Heart left ventricle (tissue), 16 donors: ENCODE measurements at regions of chrX and their contacts with region 1.

Region 1: DNA sequence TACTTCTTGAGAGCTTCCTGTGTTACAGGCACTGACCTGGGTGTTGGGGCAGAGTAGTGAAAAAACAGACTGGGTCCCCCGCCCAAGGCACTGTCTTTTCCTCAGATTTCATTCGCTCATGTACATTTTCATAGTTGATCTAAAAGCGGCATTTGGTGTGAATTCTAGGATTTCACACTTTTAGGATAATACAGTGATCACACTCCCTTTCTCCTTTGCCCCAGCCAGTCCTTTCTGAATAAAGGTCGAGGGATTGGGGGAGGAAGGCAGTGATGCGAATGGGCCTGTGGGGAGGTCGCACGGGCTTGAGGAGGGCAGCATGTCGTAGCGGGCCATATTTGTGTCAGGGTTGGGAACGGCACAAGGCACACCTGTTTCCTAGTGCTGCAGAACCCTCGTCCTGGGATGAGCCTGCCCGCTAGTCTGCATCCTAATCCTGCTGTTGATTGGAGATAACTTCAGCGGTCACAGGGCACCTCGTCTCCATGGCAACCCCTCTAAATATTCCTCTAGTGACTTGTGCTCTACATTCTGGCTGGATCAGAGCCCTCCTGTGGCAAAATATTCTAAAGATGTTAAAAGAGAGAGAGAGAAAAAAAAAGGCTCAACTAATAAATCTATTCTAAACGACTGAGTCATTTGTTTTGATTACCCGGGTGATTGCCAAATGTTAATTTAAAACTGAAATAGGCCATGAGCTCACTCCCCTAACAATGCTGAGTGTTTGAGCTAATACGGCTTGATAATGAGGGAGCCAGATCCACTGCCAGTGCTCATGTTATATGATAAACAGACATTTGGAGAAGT is 21.8 kb downstream of the FHL1 start:
- DNase-seq: peak; percentile 53 to 75 (median 63)
- ATAC-seq: peak; percentile 83 to 87 (median 84)
- H3K4me3 ChIP-seq: peak overlapping the region in 8 of 12 donors; percentile 7 to 37 (median 18)
- H3K27ac ChIP-seq: peak overlapping the region; percentile 63 to 95 (median 83)
- H3K4me1 ChIP-seq: peaks cover 0 to 69% (median 24%) of the 10 kb centered on the region in 12 donors
- H3K27me3 ChIP-seq: peaks cover 0 to 8% (median 0%) of the 10 kb centered on the region in 9 donors
- CTCF ChIP-seq: peak in 1 of 12 donors; percentile 4
- POLR2A ChIP-seq: no peak

Region 2: GRCh38 chrX:136200466-136200865 is 31.3 kb after region 1 on chrX:
- intact Hi-C with region 1: loop called in 7 of 10 experiments (anchors 2 to 5 kb)
- DNase-seq: no peak
- ATAC-seq: peak; percentile 32 to 52 (median 39)
- H3K4me3 ChIP-seq: peak overlapping the region in 11 of 12 donors; percentile 5 to 56 (median 47)
- H3K27ac ChIP-seq: peak overlapping the region; percentile 67 to 93 (median 86)
- H3K4me1 ChIP-seq: peaks cover 3 to 72% (median 30%) of the 10 kb centered on the region in 12 donors
- H3K27me3 ChIP-seq: peaks cover 0 to 16% (median 0%) of the 10 kb centered on the region in 9 donors
- CTCF ChIP-seq: peak; percentile 14 to 51 (median 38)
- POLR2A ChIP-seq: no peak

Region 3: DNA sequence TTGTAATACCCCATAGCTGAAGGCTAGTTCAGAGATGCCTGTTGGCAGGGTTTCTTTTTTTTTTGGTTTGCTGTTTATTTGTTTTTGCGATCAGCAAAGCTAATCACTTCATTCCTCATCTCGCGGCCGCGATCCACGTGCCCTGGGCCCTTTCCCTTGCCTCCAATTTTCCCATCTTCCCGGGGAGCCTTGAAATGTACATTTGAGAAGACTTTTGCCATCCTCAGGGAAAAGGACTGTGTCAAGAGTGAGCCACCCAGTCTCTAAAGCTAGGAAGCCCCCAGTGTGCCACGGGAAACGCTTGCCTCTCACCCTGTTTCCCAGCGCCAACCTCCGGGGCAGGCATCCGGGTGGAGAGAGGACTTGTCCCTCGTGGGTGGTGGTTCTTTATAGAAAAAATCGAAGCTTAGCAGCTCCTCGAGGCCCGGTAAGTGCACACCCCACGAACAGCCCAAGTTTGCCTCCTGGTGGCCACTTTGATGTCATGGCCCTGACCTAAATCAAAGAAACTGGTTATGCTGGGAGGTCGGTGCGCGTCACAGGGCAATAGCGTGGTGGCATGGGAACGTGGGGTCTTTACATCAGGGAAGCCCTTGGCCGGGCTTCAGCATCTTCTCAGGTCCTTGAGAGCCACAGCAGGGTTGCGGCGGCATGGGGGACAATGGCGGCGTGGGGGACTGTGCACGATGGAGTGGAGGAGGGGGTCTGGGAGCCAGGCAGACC is 40.0 kb after region 1 on chrX:
- intact Hi-C with region 1: loop called in 8 of 10 experiments (anchors 2 to 5 kb)
- DNase-seq: peak; percentile 48 to 64 (median 57)
- ATAC-seq: peak in 3 of 4 donors; percentile 19 to 35 (median 21)
- H3K4me3 ChIP-seq: no peak overlapping the region
- H3K27ac ChIP-seq: peak overlapping the region in 11 of 12 donors; percentile 33 to 88 (median 65)
- H3K4me1 ChIP-seq: peaks cover 0 to 73% (median 24%) of the 10 kb centered on the region in 12 donors
- H3K27me3 ChIP-seq: peaks cover 0 to 3% (median 0%) of the 10 kb centered on the region in 9 donors
- CTCF ChIP-seq: peak; percentile 34 to 64 (median 50)
- POLR2A ChIP-seq: no peak